B cell (primary cell): ENCODE measurements at regions of chr13 and their contacts with region 1.

Region 1: GRCh38 chr13:30617315-30618185 is at the start of gene USPL1:
- DNase-seq: peak; percentile 100
- ATAC-seq: peak; percentile 82
- H3K4me3 ChIP-seq: peak within 1 kb of the TSS; percentile 90 to 98 (median 93)
- H3K4me3 Mint-ChIP-seq: no peak within 1 kb of the TSS
- H3K27ac ChIP-seq: peak within 1 kb of the TSS; percentile 98 to 100
- H3K27ac Mint-ChIP-seq: no peak within 1 kb of the TSS
- H3K4me1 ChIP-seq: peaks cover 36 to 38% of the 10 kb centered on the region in 2 donors
- H3K4me1 Mint-ChIP-seq: peaks cover 35% of the 10 kb centered on the region
- H3K27me3 ChIP-seq: no peaks in the 10 kb centered on the region
- H3K27me3 Mint-ChIP-seq: no peaks in the 10 kb centered on the region
- CTCF ChIP-seq: no peak
- total RNA-seq, gene USPL1: 52.2 and 55.8 TPM in 2 replicates

Region 2: GRCh38 chr13:29850224-29850898 is 767.2 kb before region 1 on chr13 and contains the start of gene UBL3:
- CTCF ChIA-PET with region 1: no interaction called
- POLR2A ChIA-PET with region 1: no interaction called
- intact Hi-C with region 1: loop called (anchors 1 kb)
- DNase-seq: peak; percentile 97
- ATAC-seq: peak; percentile 92
- H3K4me3 ChIP-seq: peak within 1 kb of the TSS; percentile 78 to 99 (median 87)
- H3K4me3 Mint-ChIP-seq: peak within 1 kb of the TSS; percentile 91
- H3K27ac ChIP-seq: peak within 1 kb of the TSS; percentile 93 to 94
- H3K27ac Mint-ChIP-seq: peak within 1 kb of the TSS; percentile 99
- H3K4me1 ChIP-seq: peaks cover 17 to 20% of the 10 kb centered on the region in 2 donors
- H3K4me1 Mint-ChIP-seq: peaks cover 28% of the 10 kb centered on the region
- H3K27me3 ChIP-seq: no peaks in the 10 kb centered on the region
- H3K27me3 Mint-ChIP-seq: no peaks in the 10 kb centered on the region
- CTCF ChIP-seq: no peak
- total RNA-seq, gene UBL3: 26.4 and 27.9 TPM in 2 replicates

Region 3: DNA sequence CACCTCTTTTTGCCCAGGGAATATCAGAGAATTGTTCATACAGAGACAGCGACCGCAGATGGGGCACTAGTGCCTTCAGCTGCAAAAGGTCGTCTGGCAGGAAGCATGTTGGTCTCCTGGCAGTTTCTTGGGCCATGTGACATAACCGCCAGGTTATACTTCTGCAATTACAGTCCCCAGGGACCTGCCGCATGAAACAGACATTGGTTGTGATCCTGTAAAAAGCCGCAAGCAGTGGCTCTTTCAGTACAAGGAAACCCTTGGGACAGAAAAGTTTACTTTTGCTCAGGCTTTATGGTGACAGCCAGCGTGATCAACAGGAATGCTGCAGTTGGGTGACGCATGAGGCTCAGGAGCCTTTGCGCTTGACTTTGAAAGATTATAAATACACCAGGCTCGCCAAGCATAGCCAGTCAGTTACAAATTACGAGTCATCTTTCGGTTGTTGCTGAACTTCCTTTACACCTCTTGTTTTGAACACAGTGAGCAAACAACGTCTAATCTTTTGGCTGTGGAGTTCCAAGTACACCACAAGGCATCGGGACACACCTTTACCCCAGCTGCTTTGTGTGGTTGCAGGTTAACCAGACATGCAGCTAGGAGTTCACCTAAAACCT is 245.8 kb before region 1 on chr13:
- CTCF ChIA-PET with region 1: interaction called, 4 read pairs
- POLR2A ChIA-PET with region 1: interaction called, 12 read pairs
- intact Hi-C with region 1: loop called (anchors 1 kb)
- DNase-seq: peak; percentile 98
- ATAC-seq: peak; percentile 83
- H3K4me3 ChIP-seq: peak overlapping the region; percentile 13 to 47 (median 45)
- H3K4me3 Mint-ChIP-seq: peak overlapping the region; percentile 91
- H3K27ac ChIP-seq: peak overlapping the region; percentile 76 to 78
- H3K27ac Mint-ChIP-seq: peak overlapping the region; percentile 94
- H3K4me1 ChIP-seq: peaks cover 75 to 81% of the 10 kb centered on the region in 2 donors
- H3K4me1 Mint-ChIP-seq: peaks cover 84% of the 10 kb centered on the region
- H3K27me3 ChIP-seq: no peaks in the 10 kb centered on the region
- H3K27me3 Mint-ChIP-seq: no peaks in the 10 kb centered on the region
- CTCF ChIP-seq: no peak

Region 4: GRCh38 chr13:30629527-30629926 is 12.0 kb after region 1 on chr13:
- CTCF ChIA-PET with region 1: interaction called, 4 read pairs
- POLR2A ChIA-PET with region 1: interaction called, 15 read pairs
- intact Hi-C with region 1: loop called (anchors 1 kb)
- DNase-seq: no peak
- ATAC-seq: no peak
- H3K4me3 ChIP-seq: no peak overlapping the region
- H3K4me3 Mint-ChIP-seq: no peak overlapping the region
- H3K27ac ChIP-seq: peak overlapping the region in 1 of 2 donors; percentile 35
- H3K27ac Mint-ChIP-seq: peak overlapping the region; percentile 70
- H3K4me1 ChIP-seq: peaks cover 16 to 21% of the 10 kb centered on the region in 2 donors
- H3K4me1 Mint-ChIP-seq: peaks cover 46% of the 10 kb centered on the region
- H3K27me3 ChIP-seq: no peaks in the 10 kb centered on the region
- H3K27me3 Mint-ChIP-seq: no peaks in the 10 kb centered on the region
- CTCF ChIP-seq: no peak

Region 5: DNA sequence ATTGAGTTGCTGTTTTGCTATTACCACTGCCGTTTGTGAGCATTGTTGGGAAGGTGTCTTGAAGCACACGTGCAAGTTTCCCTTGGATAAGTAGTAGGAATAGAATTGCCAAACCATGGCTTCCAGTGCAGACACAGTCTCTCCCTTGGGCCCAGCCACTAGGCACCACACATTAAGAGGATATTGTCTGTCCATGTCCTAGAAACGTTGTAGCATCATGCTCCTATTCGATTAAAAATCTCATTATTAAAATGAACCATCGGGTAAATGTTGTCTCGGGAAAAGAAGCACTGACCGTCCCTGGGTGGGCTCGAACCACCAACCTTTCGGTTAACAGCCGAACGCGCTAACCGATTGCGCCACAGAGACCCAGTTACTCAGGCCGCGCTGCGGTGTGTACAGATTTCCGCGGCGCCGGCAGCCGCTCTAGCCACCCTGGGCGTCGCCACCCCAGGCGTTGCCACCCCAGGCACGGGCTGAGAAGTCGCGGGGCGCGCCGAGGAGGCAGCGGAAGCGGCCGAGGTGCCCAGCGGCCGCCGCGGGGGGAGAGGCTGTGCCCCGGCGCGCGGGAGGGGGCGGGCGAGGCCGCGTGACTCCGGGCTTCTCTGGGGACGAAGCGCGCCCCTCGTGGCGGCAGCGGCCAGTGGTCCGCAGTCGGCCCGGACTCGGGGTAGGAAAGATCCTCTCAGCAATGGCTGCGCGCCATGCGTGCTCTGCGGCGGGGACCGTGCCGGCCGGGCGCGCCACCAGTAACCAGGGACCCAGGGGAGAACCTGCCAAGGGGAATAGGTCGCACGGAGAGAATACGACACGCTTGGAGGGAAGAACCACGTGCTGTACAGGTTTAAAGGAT is 56.3 kb after region 1 on chr13:
- CTCF ChIA-PET with region 1: interaction called, 3 read pairs
- POLR2A ChIA-PET with region 1: interaction called, 8 read pairs
- intact Hi-C with region 1: loop called (anchors 1 kb)
- DNase-seq: peak; percentile 97
- ATAC-seq: peak; percentile 92
- H3K4me3 ChIP-seq: peak overlapping the region; percentile 52 to 73 (median 65)
- H3K4me3 Mint-ChIP-seq: peak overlapping the region; percentile 97
- H3K27ac ChIP-seq: peak overlapping the region; percentile 47 to 57
- H3K27ac Mint-ChIP-seq: peak overlapping the region; percentile 99
- H3K4me1 ChIP-seq: peaks cover 8 to 19% of the 10 kb centered on the region in 2 donors
- H3K4me1 Mint-ChIP-seq: peaks cover 30% of the 10 kb centered on the region
- H3K27me3 ChIP-seq: no peaks in the 10 kb centered on the region
- H3K27me3 Mint-ChIP-seq: no peaks in the 10 kb centered on the region
- CTCF ChIP-seq: peak; percentile 73

Region 6: GRCh38 chr13:30802953-30803478 is 185.5 kb after region 1 on chr13:
- CTCF ChIA-PET with region 1: interaction called, 4 read pairs
- POLR2A ChIA-PET with region 1: no interaction called
- intact Hi-C with region 1: loop called (anchors 2 kb)
- DNase-seq: peak; percentile 87
- ATAC-seq: peak; percentile 99
- H3K4me3 ChIP-seq: peak overlapping the region in 3 of 5 experiments; percentile 18 to 37 (median 21)
- H3K4me3 Mint-ChIP-seq: peak overlapping the region; percentile 80
- H3K27ac ChIP-seq: no peak overlapping the region
- H3K27ac Mint-ChIP-seq: no peak overlapping the region
- H3K4me1 ChIP-seq: peaks cover 8 to 9% of the 10 kb centered on the region in 2 donors
- H3K4me1 Mint-ChIP-seq: peaks cover 11% of the 10 kb centered on the region
- H3K27me3 ChIP-seq: peaks cover 0 to 8% (median 0%) of the 10 kb centered on the region in 4 experiments
- H3K27me3 Mint-ChIP-seq: no peaks in the 10 kb centered on the region
- CTCF ChIP-seq: peak; percentile 98

Region 7: GRCh38 chr13:32427852-32428580 is 1810.5 kb after region 1 on chr13 and contains the start of gene N4BP2L1:
- CTCF ChIA-PET with region 1: no interaction called
- POLR2A ChIA-PET with region 1: no interaction called
- intact Hi-C with region 1: loop called (anchors 5 kb)
- DNase-seq: peak; percentile 93
- ATAC-seq: peak; percentile 74
- H3K4me3 ChIP-seq: peak within 1 kb of the TSS; percentile 73 to 93 (median 80)
- H3K4me3 Mint-ChIP-seq: peak within 1 kb of the TSS; percentile 88
- H3K27ac ChIP-seq: peak within 1 kb of the TSS; percentile 95 to 98
- H3K27ac Mint-ChIP-seq: peak within 1 kb of the TSS; percentile 96
- H3K4me1 ChIP-seq: peaks cover 28 to 47% of the 10 kb centered on the region in 2 donors
- H3K4me1 Mint-ChIP-seq: peaks cover 48% of the 10 kb centered on the region
- H3K27me3 ChIP-seq: no peaks in the 10 kb centered on the region
- H3K27me3 Mint-ChIP-seq: no peaks in the 10 kb centered on the region
- CTCF ChIP-seq: no peak
- total RNA-seq, gene N4BP2L1: 52.8 and 59.0 TPM in 2 replicates